ENCODE measurements at regions of chr4 and their contacts with region 1.

Region 1: DNA sequence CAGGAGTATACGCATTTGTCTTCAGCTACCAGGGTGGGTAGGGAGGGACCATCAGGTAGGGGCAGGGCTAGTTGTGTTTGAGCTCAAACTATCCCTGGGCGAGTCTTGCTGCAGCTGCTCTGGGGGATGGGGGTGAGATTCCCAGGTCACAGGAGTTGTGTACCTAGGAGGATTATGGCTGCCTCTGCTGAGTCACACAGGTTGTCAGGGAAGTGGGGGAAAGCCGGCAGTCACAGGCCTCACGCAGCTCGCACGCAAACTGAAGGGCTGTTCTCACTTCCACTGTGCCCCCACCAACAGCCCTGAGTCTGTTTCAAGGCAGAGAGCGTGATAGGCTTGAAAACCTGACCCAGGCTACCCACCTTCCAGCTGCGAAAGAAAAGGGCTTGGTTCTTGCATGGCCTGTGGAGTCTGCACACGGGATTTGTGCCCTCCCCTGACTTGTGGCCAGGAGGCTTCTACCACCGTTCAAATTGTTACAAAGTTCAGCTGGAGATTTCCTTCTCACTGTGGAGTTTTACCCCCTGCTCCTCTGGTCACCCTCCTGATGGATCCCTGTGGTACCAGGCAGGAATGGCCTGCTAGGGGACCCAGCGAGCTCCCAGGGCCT is 63.8 kb downstream of the ARFIP1 start:
- DNase-seq: no peak
- ATAC-seq: no peak
- H3K4me3 ChIP-seq: no peak overlapping the region
- H3K27ac ChIP-seq: no peak overlapping the region
- H3K4me1 ChIP-seq: no peaks in the 10 kb centered on the region; the same call in 1 of the 2 replicates
- H3K27me3 ChIP-seq: no peaks in the 10 kb centered on the region
- CTCF ChIP-seq: no peak

Region 2: DNA sequence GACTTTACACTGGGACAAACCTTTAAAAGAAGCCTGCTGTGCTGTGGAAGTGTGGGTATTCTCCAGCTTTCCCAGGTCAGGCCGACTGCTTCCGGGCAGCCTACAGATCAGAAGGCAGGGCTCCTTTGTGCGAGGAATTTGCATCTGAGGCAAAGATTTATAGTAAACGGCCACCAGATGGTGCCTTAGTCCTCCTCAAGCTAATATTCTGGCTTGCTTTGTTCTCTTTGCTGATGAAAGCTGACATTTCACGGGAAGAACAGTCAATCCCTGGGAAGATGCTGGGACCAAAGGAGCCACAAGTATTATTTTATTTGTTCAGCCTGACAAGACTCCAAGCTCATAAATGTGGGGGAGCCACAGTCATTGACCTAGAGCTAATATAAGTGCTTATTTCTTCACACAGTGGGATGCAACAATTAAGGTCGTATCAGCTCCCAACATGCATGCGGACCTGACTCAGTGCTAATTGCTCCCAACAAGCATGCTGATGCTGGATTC is 239.9 kb after region 1 on chr4:
- CTCF ChIA-PET with region 1: no interaction called
- POLR2A ChIA-PET with region 1: no interaction called
- in situ Hi-C with region 1: no loop called
- intact Hi-C with region 1: loop called (anchors 2 kb)
- DNase-seq: peak; percentile 42
- ATAC-seq: peak; percentile 88
- H3K4me3 ChIP-seq: no peak overlapping the region
- H3K27ac ChIP-seq: no peak overlapping the region
- H3K4me1 ChIP-seq: 0 out of 2 replicates have a peak, but pooled peaks cover 3% of the 10 kb centered on the region
- H3K27me3 ChIP-seq: no peaks in the 10 kb centered on the region
- CTCF ChIP-seq: peak; percentile 68